Common myeloid progenitor, CD34-positive (primary cell): ENCODE measurements at regions of chr1 and their contacts with region 1.

Region 1: GRCh38 chr1:46223472-46223943 is 20.4 kb downstream of the LURAP1 start:
- DNase-seq: peak; percentile 81 to 89 (median 87)
- H3K4me3 ChIP-seq: no peak overlapping the region
- H3K27ac ChIP-seq: no peak overlapping the region
- H3K4me1 ChIP-seq: peaks cover 0 to 2% (median 0%) of the 10 kb centered on the region in 4 experiments
- H3K27me3 ChIP-seq: no peaks in the 10 kb centered on the region

Region 2: GRCh38 chr1:46036894-46037839 is 186.3 kb before region 1 on chr1:
- CTCF ChIA-PET with region 1: interaction called, 75 read pairs
- POLR2A ChIA-PET with region 1: no interaction called
- DNase-seq: peak; percentile 78 to 90 (median 83)
- H3K4me3 ChIP-seq: no peak overlapping the region
- H3K27ac ChIP-seq: no peak overlapping the region
- H3K4me1 ChIP-seq: peaks cover 0 to 10% (median 6%) of the 10 kb centered on the region in 4 experiments
- H3K27me3 ChIP-seq: no peaks in the 10 kb centered on the region

Region 3: DNA sequence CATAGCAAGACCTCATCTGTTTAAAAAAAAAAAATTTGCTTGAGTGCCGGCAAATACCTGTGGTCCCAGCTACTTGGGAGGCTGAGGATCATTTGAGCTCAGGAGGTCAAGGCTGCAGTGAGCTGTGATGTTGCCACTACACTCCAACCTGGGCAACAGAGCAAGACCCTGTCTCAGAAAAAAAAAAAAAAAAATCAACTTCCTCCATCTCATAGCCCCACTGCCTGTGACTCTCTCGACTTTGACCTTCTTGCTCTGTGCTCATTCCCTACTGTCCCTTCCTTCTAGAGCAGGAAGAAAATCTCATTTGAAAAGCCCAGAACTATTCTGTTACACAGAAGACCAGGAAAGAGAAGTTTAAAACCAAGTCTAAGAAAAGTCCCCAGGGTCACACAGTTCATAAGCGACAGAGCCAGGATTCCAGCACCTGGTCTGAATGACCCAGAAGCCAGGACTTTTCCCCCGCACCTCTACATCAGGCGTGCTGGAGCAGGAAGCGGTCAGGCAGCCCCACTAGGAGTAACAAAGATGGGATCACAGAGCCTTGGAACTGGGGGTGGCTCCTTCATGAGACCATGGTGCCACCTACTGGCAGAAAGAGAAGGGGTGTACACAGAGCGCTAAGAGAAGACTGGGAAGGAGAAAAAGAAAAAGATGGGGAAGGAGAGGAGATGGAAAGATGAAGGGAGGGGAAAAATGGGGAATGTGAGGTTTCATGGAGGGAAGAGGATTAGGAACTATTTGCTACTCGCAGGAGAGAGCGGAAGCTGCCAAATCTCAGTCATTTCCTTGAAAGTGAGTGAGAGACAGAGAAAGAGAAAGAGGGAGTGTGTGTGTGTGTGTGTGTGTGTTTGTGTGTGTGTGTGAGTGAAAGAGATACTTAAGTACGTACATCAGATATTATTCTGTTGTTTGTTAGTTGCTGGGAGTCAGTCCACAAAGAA is 44.1 kb before region 1 on chr1:
- CTCF ChIA-PET with region 1: interaction called, 19 read pairs
- POLR2A ChIA-PET with region 1: interaction called, 3 read pairs
- DNase-seq: peak; percentile 65 to 72 (median 67)
- H3K4me3 ChIP-seq: peak overlapping the region in 3 of 7 experiments; percentile 22 to 62 (median 50)
- H3K27ac ChIP-seq: no peak overlapping the region
- H3K4me1 ChIP-seq: peaks cover 0 to 14% (median 7%) of the 10 kb centered on the region in 4 experiments
- H3K27me3 ChIP-seq: no peaks in the 10 kb centered on the region

Region 4: GRCh38 chr1:46197964-46198811 is 25.3 kb before region 1 on chr1 and contains the start of gene POMGNT1:
- CTCF ChIA-PET with region 1: interaction called, 12 read pairs
- POLR2A ChIA-PET with region 1: interaction called, 3 read pairs
- DNase-seq: peak; percentile 37 to 86 (median 65)
- H3K4me3 ChIP-seq: peak within 1 kb of the TSS; percentile 56 to 91 (median 82)
- H3K27ac ChIP-seq: peak within 1 kb of the TSS; percentile 50 to 80
- H3K4me1 ChIP-seq: peaks cover 2 to 26% (median 25%) of the 10 kb centered on the region in 4 experiments
- H3K27me3 ChIP-seq: no peaks in the 10 kb centered on the region

Region 5: DNA sequence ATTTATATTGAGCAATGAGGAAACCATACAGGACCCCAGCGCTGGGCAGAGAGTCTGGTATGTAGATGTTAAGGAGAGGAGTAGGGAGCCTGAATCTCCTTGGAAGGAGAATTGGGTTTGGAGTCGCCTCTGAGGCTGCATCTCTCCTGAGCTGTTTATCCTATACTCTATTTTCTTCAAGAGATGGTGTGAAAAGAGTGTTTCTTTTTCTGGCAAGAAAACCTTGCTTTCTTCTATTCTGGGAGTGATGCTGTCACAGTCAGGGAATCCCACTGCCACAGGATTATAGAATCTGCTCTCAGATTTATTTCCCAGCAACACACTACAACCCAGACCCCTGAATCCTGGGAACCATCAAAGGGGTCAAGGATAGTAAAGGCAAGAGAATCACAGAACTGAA is 17.1 kb before region 1 on chr1:
- CTCF ChIA-PET with region 1: interaction called, 13 read pairs
- POLR2A ChIA-PET with region 1: interaction called, 3 read pairs
- DNase-seq: no peak
- H3K4me3 ChIP-seq: no peak overlapping the region
- H3K27ac ChIP-seq: no peak overlapping the region
- H3K4me1 ChIP-seq: peaks cover 3 to 27% (median 19%) of the 10 kb centered on the region in 4 experiments
- H3K27me3 ChIP-seq: no peaks in the 10 kb centered on the region

Region 6: DNA sequence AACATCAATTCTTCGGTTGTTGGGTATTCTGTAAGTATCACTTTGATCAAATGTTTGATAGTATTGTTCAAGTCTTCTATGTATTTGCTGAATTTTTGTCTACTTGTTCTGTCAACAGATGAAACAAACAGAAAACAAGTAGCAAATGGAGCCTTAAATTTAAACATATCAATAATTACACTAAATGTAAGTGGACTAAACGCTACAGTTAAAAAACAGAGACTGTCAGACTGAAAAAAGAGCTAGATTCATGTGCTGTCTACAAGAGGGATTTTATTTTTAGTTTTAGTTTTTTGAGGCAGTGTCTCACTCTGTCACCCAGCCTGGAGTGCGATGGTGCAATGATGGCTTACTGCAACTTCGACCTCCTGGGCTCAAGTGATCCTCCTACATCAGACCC is 13.4 kb after region 1 on chr1:
- CTCF ChIA-PET with region 1: interaction called, 16 read pairs
- POLR2A ChIA-PET with region 1: no interaction called
- DNase-seq: no peak
- H3K4me3 ChIP-seq: no peak overlapping the region
- H3K27ac ChIP-seq: no peak overlapping the region
- H3K4me1 ChIP-seq: peaks cover 0 to 4% (median 2%) of the 10 kb centered on the region in 4 experiments
- H3K27me3 ChIP-seq: no peaks in the 10 kb centered on the region

Region 7: GRCh38 chr1:46244656-46245371 is 21.3 kb after region 1 on chr1:
- CTCF ChIA-PET with region 1: interaction called, 12 read pairs
- POLR2A ChIA-PET with region 1: no interaction called
- DNase-seq: peak; percentile 50 to 75 (median 68)
- H3K4me3 ChIP-seq: no peak overlapping the region
- H3K27ac ChIP-seq: no peak overlapping the region
- H3K4me1 ChIP-seq: peaks cover 10 to 28% (median 24%) of the 10 kb centered on the region in 4 experiments
- H3K27me3 ChIP-seq: no peaks in the 10 kb centered on the region